Endothelial cell of umbilical vein (primary cell): ENCODE measurements at regions of chr4 and their contacts with region 1.

Region 1: DNA sequence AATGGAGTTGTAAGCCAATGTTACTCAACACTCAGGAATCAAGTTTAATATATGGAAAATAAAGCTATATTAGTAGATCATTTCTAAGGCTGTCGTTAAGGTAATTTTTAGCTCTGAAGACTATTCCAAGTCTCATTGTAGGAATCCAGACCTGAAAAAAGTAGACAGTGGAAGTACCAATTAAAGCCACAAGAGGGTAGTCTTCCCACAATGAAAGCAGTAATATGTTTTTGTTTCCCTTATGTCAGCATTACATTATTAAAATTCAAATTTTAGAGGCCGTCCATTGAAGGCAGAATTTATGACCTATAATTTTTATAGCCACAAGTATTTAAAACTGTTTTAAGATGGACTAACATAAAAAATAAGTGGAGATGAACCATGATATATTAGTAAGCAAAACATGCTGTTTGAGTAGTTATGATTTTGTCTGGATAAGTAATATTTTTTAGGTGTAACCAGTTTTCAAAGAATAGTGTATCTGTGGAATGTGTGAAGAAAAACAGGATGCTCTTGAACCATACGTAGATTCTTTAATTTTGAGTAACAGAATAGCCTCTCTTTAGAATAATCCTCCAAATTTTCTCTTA is 372.6 kb upstream of the TECRL start:
- DNase-seq: peak; percentile 71
- H3K4me3 ChIP-seq: no peak overlapping the region
- H3K27ac ChIP-seq: no peak overlapping the region
- H3K4me1 ChIP-seq: peaks cover 24% of the 10 kb centered on the region
- H3K27me3 ChIP-seq: no peaks in the 10 kb centered on the region
- CTCF ChIP-seq: peak; percentile 39 to 46
- POLR2A ChIP-seq: no peak

Region 2: GRCh38 chr4:64713256-64713840 is 68.5 kb before region 1 on chr4:
- CTCF ChIA-PET with region 1: no interaction called
- POLR2A ChIA-PET with region 1: no interaction called
- dilution Hi-C with region 1: no loop called
- intact Hi-C with region 1: loop called (anchors 5 kb)
- DNase-seq: peak; percentile 17
- H3K4me3 ChIP-seq: no peak overlapping the region
- H3K27ac ChIP-seq: no peak overlapping the region
- H3K4me1 ChIP-seq: no peaks in the 10 kb centered on the region
- H3K27me3 ChIP-seq: no peaks in the 10 kb centered on the region
- CTCF ChIP-seq: peak; percentile 20 to 25
- POLR2A ChIP-seq: no peak

Region 3: DNA sequence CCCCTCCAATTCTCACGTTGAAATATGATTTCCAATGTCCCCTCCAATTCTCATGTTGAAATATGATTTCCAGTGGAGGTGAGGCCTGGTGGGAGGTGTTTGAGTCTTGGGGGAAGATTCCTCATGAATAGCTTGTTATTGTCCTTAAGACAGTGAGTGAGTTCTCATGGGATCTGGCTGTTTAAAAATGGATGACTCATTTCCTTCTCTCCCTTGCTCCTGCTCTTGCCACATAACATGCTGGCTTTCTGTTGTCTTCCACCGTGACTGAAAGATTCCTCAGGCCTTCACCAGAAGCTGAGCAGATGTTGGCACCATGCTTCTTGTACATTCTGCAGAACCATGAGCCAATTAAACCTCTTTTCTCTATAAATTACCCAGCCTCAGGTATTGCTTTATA is 25.8 kb before region 1 on chr4:
- CTCF ChIA-PET with region 1: no interaction called
- POLR2A ChIA-PET with region 1: no interaction called
- dilution Hi-C with region 1: no loop called
- intact Hi-C with region 1: no loop called
- DNase-seq: peak; percentile 1
- H3K4me3 ChIP-seq: no peak overlapping the region
- H3K27ac ChIP-seq: no peak overlapping the region
- H3K4me1 ChIP-seq: no peaks in the 10 kb centered on the region
- H3K27me3 ChIP-seq: no peaks in the 10 kb centered on the region
- CTCF ChIP-seq: no peak
- POLR2A ChIP-seq: no peak

Region 4: GRCh38 chr4:64822405-64822804 is 40.6 kb after region 1 on chr4:
- CTCF ChIA-PET with region 1: no interaction called
- POLR2A ChIA-PET with region 1: no interaction called
- dilution Hi-C with region 1: no loop called
- intact Hi-C with region 1: no loop called
- DNase-seq: no peak
- H3K4me3 ChIP-seq: no peak overlapping the region
- H3K27ac ChIP-seq: no peak overlapping the region
- H3K4me1 ChIP-seq: no peaks in the 10 kb centered on the region
- H3K27me3 ChIP-seq: no peaks in the 10 kb centered on the region
- CTCF ChIP-seq: no peak
- POLR2A ChIP-seq: no peak

Region 5: GRCh38 chr4:65007841-65008439 is 226.1 kb after region 1 on chr4:
- CTCF ChIA-PET with region 1: interaction called, 3 read pairs
- POLR2A ChIA-PET with region 1: no interaction called
- dilution Hi-C with region 1: no loop called
- intact Hi-C with region 1: loop called (anchors 2 kb)
- DNase-seq: peak; percentile 50
- H3K4me3 ChIP-seq: no peak overlapping the region
- H3K27ac ChIP-seq: no peak overlapping the region
- H3K4me1 ChIP-seq: no peaks in the 10 kb centered on the region
- H3K27me3 ChIP-seq: no peaks in the 10 kb centered on the region
- CTCF ChIP-seq: peak; percentile 39 to 40
- POLR2A ChIP-seq: no peak

Region 6: DNA sequence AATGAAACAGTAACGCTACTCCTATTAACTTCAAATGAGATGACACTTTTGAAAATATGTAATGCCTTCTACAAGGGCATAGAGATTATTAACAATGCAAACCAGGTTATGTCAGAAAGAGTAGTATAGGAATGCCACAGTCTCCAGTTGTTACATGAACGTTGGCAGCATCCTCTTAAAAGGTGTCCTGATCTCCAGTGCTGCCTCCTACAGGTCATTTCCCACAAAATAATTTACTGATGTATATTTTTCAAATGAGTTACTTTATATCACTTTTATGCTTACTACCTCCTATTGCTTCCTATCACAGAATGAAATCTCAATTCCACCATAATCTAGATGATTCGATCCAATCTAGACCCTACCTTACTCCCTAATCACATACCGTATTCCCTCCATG is 1083.7 kb after region 1 on chr4:
- CTCF ChIA-PET with region 1: no interaction called
- POLR2A ChIA-PET with region 1: no interaction called
- dilution Hi-C with region 1: no loop called
- intact Hi-C with region 1: loop called (anchors 2 kb)
- DNase-seq: peak; percentile 55
- H3K4me3 ChIP-seq: no peak overlapping the region
- H3K27ac ChIP-seq: no peak overlapping the region
- H3K4me1 ChIP-seq: no peaks in the 10 kb centered on the region
- H3K27me3 ChIP-seq: no peaks in the 10 kb centered on the region
- CTCF ChIP-seq: peak; percentile 36 to 43
- POLR2A ChIP-seq: no peak

Region 7: DNA sequence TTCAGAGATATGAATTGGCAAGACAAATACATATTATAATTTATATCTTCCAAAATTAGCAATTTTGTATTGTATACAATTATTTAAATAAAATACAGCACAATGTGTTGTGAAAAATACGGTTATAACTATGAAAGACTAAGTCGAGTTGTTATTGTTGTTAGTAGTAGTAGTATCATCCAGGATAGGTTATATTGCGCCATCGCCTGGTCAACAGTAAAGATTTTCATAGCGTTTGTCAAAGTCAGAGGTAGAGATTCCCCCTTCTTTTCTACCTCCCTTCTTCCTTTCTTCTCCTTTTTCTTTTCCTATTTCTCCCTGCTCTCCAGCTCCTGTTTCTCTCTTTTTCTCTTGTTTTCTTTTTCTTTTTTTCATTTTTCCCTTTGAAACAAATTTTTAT is 1387.5 kb after region 1 on chr4:
- CTCF ChIA-PET with region 1: interaction called, 3 read pairs
- POLR2A ChIA-PET with region 1: no interaction called
- dilution Hi-C with region 1: no loop called
- intact Hi-C with region 1: loop called (anchors 10 kb)
- DNase-seq: peak; percentile 4
- H3K4me3 ChIP-seq: no peak overlapping the region
- H3K27ac ChIP-seq: no peak overlapping the region
- H3K4me1 ChIP-seq: no peaks in the 10 kb centered on the region
- H3K27me3 ChIP-seq: peaks cover 0 to 2% of the 10 kb centered on the region in 2 experiments
- CTCF ChIP-seq: no peak
- POLR2A ChIP-seq: no peak

Region 8: GRCh38 chr4:66688674-66689073 is 1906.8 kb after region 1 on chr4:
- CTCF ChIA-PET with region 1: interaction called, 3 read pairs
- POLR2A ChIA-PET with region 1: no interaction called
- dilution Hi-C with region 1: no loop called
- intact Hi-C with region 1: loop called (anchors 5 kb)
- DNase-seq: peak; percentile 29
- H3K4me3 ChIP-seq: no peak overlapping the region
- H3K27ac ChIP-seq: no peak overlapping the region
- H3K4me1 ChIP-seq: no peaks in the 10 kb centered on the region
- H3K27me3 ChIP-seq: no peaks in the 10 kb centered on the region
- CTCF ChIP-seq: peak in 1 of 2 donors; percentile 11
- POLR2A ChIP-seq: no peak